Vagina (tissue), 2 donors: ENCODE measurements at regions of chr2 and their contacts with region 1.

Region 1: DNA sequence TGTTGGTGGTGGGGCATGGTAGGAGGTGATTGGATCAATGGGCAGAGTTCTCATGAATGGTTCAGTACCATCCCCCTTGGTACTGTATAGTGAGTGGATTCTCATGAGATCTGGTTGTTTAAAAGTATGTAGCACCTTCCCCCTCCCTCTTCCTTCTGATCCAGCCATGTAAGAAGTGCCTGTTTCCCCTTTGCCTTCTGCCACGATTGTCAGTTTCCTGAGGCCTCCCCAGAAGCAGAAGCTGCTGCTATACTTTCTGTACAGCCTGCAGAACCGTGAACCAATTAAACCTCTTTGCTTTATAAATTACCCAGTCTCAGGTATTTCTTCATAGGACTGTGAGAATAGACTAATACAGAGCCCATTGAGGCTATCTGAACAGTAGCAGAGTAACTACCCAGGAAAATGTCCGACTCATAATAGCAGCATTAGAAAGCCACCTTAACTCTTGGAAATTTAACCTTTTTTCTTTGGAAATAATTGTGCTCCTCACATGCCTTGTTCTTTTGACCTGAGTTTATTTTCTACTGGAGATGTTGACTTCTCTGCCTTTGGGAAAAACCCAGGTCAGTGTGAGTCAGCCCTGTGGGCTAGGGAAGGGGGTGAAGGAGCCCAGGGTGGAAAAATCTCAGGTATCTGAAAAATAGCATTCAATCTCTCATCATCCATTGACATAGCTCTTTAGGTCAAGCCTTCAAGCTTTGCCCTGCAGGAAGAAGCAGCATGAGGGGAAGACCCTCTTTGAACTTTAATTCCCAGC is 18.1 kb downstream of the CYP1B1 start:
- DNase-seq: no peak
- H3K4me3 ChIP-seq: no peak overlapping the region
- H3K27ac ChIP-seq: no peak overlapping the region
- H3K4me1 ChIP-seq: no peaks in the 10 kb centered on the region
- H3K27me3 ChIP-seq: no peaks in the 10 kb centered on the region
- CTCF ChIP-seq: no peak
- POLR2A ChIP-seq: no peak

Region 2: DNA sequence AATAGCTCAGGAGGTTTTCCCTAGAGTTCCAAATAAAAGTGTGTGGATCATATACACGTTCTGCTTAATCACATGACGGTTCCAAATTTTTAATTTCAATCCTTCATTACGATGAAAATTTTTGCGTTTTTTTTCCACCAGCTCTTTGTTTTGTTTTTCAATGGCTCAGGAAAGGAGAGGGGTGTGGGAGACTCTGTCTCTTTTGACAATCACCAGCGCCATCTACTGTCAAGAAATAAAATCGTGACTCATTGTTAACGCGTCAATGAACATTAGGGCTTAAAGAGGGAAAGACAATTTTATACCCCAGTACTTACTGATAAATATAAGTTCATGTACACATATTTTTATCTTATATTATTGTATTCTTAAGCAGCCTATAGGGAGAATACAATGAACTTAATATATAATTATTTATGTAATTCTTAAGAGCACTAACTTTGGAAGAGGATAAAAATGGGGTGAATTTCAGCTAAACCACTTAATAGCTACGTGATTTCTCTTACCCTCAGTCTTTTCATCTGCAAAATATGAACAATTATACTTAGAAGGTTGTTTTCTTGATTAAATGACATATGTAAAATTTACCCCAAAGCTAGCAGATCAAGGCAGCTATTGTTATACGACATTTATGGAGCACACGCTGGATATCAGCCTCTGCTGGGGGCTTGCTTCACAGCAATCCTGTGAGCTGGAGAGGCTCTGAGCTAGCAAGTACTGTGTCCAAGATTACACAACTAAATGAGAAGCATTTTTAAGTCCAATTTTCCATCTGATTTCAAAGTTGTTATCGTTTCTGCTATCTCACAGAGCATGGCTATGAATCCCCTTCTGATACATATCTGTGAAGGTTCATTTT is 180.1 kb before region 1 on chr2:
- intact Hi-C with region 1: no loop called
- DNase-seq: no peak
- H3K4me3 ChIP-seq: no peak overlapping the region
- H3K27ac ChIP-seq: no peak overlapping the region
- H3K4me1 ChIP-seq: no peaks in the 10 kb centered on the region
- H3K27me3 ChIP-seq: no peaks in the 10 kb centered on the region
- CTCF ChIP-seq: peak; percentile 42 to 77 (median 59)
- POLR2A ChIP-seq: no peak

Region 3: GRCh38 chr2:37896314-37896713 is 161.5 kb before region 1 on chr2:
- intact Hi-C with region 1: no loop called
- DNase-seq: no peak
- H3K4me3 ChIP-seq: no peak overlapping the region
- H3K27ac ChIP-seq: no peak overlapping the region
- H3K4me1 ChIP-seq: no peaks in the 10 kb centered on the region
- H3K27me3 ChIP-seq: no peaks in the 10 kb centered on the region
- CTCF ChIP-seq: no peak
- POLR2A ChIP-seq: no peak

Region 4: GRCh38 chr2:38016219-38016618 is 41.6 kb before region 1 on chr2:
- intact Hi-C with region 1: loop called (anchors 2 kb)
- DNase-seq: no peak
- H3K4me3 ChIP-seq: no peak overlapping the region
- H3K27ac ChIP-seq: no peak overlapping the region
- H3K4me1 ChIP-seq: peaks cover 5% of the 10 kb centered on the region
- H3K27me3 ChIP-seq: no peaks in the 10 kb centered on the region
- CTCF ChIP-seq: no peak
- POLR2A ChIP-seq: no peak